ENCODE measurements at regions of chrX and their contacts with region 1.

Region 1: GRCh38 chrX:20538974-20539373 is 272.3 kb upstream of the RPS6KA3 start:
- DNase-seq: no peak
- ATAC-seq: no peak
- H3K4me3 Mint-ChIP-seq: no peak overlapping the region
- H3K27ac Mint-ChIP-seq: no peak overlapping the region
- H3K4me1 Mint-ChIP-seq: no peaks in the 10 kb centered on the region
- H3K27me3 Mint-ChIP-seq: peaks cover 7% of the 10 kb centered on the region
- CTCF ChIP-seq: no peak

Region 2: GRCh38 chrX:20461576-20461975 is 77.4 kb before region 1 on chrX:
- CTCF ChIA-PET with region 1: no interaction called
- POLR2A ChIA-PET with region 1: no interaction called
- intact Hi-C with region 1: no loop called
- DNase-seq: no peak
- ATAC-seq: no peak
- H3K4me3 Mint-ChIP-seq: no peak overlapping the region
- H3K27ac Mint-ChIP-seq: no peak overlapping the region
- H3K4me1 Mint-ChIP-seq: no peaks in the 10 kb centered on the region
- H3K27me3 Mint-ChIP-seq: peaks cover 1% of the 10 kb centered on the region
- CTCF ChIP-seq: no peak

Region 3: DNA sequence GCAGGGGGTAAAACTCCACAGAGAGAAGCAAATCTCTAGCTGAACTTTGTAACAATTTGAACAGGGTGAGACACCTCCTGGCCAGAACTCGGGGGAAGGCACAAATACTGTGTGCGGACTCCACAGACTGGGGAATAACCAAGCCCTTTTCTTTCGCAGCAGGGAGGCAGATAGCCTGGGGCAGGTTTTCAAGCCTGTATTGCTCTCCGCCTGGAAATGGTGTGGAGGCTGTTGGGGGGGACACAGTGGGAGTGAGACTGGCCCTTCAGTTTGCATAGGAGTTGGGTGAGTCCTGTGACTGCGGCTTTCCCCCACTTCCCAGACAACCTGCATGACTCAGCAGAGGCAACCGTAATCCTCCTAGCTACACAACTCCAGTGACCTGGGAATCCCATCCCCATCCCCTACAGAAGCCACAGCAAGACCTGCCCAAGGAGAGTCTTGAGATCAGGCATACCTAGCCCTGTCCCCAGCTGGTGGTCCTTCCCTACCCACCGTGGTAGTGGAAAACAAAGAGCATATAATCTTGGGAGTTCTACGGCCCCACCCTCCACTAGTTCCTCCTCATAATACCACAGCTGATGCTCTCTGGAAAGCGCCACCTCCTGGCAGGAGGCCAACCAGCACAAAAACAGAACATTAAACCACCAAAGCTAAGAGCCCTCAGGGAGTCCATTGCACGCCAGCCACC is 1231.8 kb after region 1 on chrX:
- CTCF ChIA-PET with region 1: no interaction called
- POLR2A ChIA-PET with region 1: interaction called, 11 read pairs
- intact Hi-C with region 1: no loop called
- DNase-seq: no peak
- ATAC-seq: no peak
- H3K4me3 Mint-ChIP-seq: no peak overlapping the region
- H3K27ac Mint-ChIP-seq: no peak overlapping the region
- H3K4me1 Mint-ChIP-seq: no peaks in the 10 kb centered on the region
- H3K27me3 Mint-ChIP-seq: peaks cover 11% of the 10 kb centered on the region
- CTCF ChIP-seq: no peak

Measured in activated B cell treated with CpG ODN at 0.5 μM for 24 hours (primary cell).